ENCODE measurements at regions of chr18 and their contacts with region 1.

Region 1: DNA sequence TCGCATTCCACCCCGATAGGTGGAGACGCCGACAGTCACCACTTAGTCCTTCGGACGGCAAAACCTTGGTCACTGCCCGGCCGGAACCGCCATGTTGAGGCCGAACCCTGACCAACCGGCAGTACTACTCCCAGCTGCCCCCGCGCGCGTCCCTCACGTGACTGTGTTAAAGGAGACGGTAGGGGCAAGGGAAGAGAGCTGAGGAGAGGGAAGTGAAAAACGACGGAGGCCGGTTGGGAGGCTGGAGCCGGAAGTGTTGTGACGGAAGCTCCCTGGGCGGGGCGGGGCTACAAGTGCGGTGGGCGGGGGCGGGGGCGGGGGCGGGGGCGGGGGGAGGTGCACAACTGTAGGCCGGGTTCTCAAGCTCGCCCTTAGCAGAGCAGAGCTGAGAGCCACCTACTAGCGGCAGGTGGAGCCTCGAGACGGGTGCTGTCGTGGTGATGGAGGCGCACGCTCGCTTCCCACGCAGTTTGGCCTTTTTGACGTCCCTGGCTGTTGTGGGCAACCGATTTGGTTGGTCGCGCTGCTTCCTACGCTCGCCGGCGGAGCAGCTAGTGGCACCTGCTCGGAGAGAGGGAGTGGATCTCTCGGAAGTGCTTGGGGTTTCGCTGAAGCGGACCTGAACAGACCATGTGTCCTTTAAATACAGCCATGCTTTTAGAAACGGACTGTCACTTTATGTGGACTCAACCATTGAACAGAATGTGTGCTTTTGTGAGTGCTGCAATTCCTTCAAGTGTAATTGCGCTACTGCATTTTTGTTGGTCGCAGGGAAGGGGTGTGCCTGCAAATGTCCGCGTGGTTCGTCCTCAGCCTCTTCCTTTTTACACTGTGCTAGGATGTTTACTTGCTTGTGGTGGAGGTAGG is at the start of gene TRAPPC8:
- DNase-seq: peak; percentile 97 to 99
- ATAC-seq: peak; percentile 98 to 99 (median 99)
- H3K4me3 ChIP-seq: peak within 1 kb of the TSS; percentile 68 to 93 (median 87)
- H3K27ac ChIP-seq: peak within 1 kb of the TSS; percentile 76 to 97 (median 93)
- H3K4me1 ChIP-seq: peaks cover 2 to 46% (median 41%) of the 10 kb centered on the region in 9 donors
- H3K27me3 ChIP-seq: no peaks in the 10 kb centered on the region
- CTCF ChIP-seq: peak in 4 of 9 donors; percentile 8 to 43 (median 37)
- total RNA-seq, gene TRAPPC8: 26.3 to 39.1 (median 32.1) TPM

Region 2: DNA sequence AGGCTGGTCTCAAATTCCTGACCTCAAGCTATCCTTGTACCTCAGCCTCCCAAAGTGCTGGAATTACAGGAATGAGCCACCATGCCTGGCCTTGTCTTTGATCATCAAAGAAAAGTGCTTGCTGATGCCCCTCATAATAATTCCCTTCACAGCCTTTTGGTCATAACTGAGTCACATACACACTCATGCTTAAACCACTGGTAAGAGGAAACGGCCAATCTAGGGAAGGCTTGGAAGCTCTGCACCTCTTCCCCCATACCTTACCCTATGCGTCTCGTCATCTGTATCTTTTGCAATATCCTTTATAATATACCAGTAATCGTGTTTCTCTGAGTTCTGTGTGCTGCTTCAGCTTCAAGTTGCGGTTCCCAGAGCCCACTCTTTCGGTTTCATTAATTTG is 143.6 kb after region 1 on chr18:
- intact Hi-C with region 1: loop called in 7 of 10 experiments (anchors 2 to 10 kb)
- DNase-seq: no peak
- ATAC-seq: no peak
- H3K4me3 ChIP-seq: no peak overlapping the region
- H3K27ac ChIP-seq: peak overlapping the region in 2 of 10 donors; percentile 73 to 91
- H3K4me1 ChIP-seq: peaks cover 0 to 43% (median 24%) of the 10 kb centered on the region in 9 donors
- H3K27me3 ChIP-seq: no peaks in the 10 kb centered on the region
- CTCF ChIP-seq: no peak

Region 3: DNA sequence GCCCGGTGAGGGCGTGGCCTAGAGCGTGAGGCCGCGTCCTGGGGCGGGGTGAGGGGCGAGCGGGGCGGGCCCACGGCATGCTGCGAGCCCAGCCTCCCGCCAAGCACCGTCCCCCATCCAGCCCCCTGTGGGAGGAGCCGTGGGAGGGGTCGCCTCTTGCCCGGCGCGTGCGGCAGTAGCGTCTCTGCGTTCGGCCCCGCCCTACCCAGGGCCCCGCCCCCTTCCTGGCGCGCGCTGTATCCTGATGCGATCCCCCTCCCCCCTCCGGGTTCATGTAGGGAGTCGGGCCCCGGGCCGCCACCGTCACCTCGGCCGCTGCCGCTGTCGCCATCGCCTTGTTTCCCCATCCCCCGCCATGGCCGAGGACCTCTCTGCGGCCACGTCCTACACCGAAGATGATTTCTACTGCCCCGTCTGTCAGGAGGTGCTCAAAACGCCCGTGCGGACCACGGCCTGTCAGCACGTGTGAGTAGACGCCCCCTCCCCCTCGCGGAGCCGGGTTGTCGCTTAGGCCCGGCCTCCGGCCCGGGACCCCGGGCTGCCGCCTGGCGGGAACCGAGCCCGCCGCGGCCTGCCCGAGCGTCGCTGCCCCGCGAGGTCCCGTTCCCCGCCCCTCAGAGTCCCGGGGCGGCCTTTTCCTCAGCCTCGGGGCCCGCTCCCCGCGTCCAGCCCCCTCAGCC is 149.3 kb after region 1 on chr18:
- intact Hi-C with region 1: loop called in 7 of 10 experiments (anchors 2 to 10 kb)
- DNase-seq: peak; percentile 99 to 100
- ATAC-seq: peak; percentile 96 to 100 (median 98)
- H3K4me3 ChIP-seq: peak overlapping the region; percentile 49 to 96 (median 84)
- H3K27ac ChIP-seq: peak overlapping the region; percentile 99 to 100 (median 99)
- H3K4me1 ChIP-seq: peaks cover 0 to 49% (median 34%) of the 10 kb centered on the region in 9 donors
- H3K27me3 ChIP-seq: no peaks in the 10 kb centered on the region
- CTCF ChIP-seq: peak in 1 of 9 donors; percentile 20

Measured in heart right ventricle (tissue), 16 donors.